ENCODE measurements at regions of chr5 and their contacts with region 1.

Region 1: DNA sequence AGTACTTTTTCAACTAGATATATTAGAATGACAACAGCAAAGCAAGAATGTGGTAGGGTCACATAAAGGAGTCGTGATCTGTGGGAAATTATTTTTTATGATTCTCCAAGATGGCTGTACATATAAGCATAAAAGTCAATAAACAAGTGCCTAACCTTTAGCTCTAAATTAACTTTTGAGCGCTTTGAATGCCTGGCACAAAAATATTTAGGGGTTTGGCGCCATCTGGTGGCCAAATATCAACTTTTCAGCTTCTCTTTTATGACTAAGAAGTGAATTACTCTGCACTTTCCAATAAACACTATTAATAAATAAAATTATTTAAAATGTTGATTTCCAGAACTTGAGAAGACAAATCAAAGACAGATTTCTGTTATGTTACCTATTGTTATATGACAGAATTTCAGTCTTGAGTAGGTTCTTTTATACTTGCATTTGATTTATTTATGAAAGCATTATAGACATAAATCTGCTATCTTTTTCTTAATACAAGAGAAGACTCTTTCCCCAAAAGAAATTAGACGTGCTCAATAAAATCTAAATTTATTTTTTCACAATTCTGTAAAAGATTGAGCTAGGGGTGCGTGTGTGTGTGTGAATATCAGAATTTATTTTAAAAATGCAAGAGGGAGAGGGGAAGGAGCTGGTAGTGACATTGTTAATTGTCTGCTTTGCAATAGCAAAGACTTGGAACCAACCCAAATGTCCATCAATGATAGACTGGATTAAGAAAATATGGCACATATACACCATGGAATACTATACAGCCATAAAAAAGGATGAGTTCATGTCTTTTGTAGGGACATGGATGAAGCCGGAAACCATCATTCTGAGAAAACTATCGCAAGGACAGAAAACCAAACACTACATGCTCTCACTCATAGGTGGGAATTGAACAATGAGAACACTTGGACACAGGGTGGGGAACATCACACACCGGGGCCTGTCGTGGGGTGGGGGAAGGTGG is 36.7 kb upstream of the ARRDC3 start:
- DNase-seq: peak in 6 of 10 donors; percentile 35 to 83 (median 68)

Region 2: GRCh38 chr5:90802474-90803317 is 617.2 kb before region 1 on chr5:
- intact Hi-C with region 1: loop called (anchors 5 kb)
- DNase-seq: peak in 2 of 10 donors; percentile 8 to 37

Region 3: DNA sequence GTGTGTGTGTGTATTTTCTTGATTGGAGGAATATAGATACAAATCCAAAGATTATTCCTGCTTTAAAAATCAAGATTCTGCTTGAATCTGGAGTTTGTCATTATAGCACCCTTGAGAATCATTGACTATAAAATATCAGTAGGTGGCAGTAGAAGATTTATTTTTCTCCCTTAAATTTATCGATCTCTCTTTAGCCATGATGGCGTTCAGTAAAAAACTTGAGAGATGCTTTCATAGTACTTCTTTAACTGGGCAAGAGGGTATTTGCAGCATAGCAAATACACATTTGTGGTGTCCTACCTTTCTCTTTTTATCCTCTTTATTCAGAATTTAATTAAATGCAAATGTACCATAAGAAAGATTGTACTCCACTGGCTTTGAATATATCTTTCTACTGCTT is 553.5 kb before region 1 on chr5:
- intact Hi-C with region 1: loop called (anchors 1 kb)
- DNase-seq: no peak

Region 4: GRCh38 chr5:90932052-90932699 is 487.7 kb before region 1 on chr5:
- intact Hi-C with region 1: loop called (anchors 10 kb)
- DNase-seq: peak in 4 of 10 donors; percentile 12 to 65 (median 28)

Region 5: GRCh38 chr5:91101600-91102379 is 318.1 kb before region 1 on chr5:
- intact Hi-C with region 1: loop called (anchors 1 kb)
- DNase-seq: peak in 9 of 10 donors; percentile 12 to 95 (median 65)

Region 6: GRCh38 chr5:91332267-91333045 is 87.4 kb before region 1 on chr5:
- intact Hi-C with region 1: no loop called
- DNase-seq: no peak

Measured in posterior cingulate gyrus (tissue), 11 donors.